ENCODE measurements at regions of chr13 and their contacts with region 1.

Region 1: GRCh38 chr13:33537026-33537425 is 251.5 kb upstream of the STARD13 start:
- DNase-seq: no peak
- ATAC-seq: no peak

Region 2: DNA sequence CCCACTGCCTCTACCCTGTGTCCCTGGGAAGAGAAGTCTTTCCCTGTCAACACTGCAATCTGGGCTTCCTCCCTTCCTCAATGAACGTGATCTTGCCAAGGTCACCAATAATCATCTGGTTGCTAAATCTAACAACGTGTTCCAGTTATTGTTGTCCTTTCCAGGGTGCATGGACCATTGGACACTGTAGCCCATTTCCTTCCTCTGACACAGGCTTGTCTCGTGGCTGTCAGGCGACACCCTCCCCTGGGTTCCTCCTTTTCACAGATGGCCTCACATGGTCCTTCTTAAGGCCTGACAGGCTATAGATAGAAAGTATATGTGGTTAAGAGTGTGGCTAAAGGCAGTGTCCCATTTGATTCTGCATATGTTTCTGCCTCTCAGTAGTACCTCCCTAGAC is 183.8 kb before region 1 on chr13:
- intact Hi-C with region 1: no loop called
- DNase-seq: peak; percentile 33
- ATAC-seq: peak; percentile 25 to 46

Region 3: DNA sequence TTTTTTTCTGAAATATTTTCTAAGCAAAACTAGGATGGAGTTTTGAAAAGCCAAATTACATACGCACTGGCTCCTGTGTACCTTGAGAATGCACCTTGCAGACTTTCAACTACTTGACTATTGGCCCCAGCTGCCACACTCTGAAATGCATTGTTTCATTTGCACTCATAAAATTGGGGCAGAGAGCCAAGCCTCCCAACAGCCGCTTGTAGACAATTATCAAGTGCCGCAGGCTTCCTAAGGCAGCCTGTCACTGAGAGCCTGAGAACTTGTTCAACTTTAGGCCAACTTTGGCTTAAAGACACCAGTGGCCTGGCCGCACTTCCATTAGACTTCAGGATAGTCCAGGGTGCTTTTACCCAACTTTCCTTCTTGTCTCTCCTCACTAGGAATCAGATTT is 135.8 kb before region 1 on chr13:
- intact Hi-C with region 1: loop called in 1 of 2 experiments (anchors 10 kb)
- DNase-seq: peak; percentile 27
- ATAC-seq: peak; percentile 55 to 56

Region 4: GRCh38 chr13:33678906-33679657 is 142.1 kb after region 1 on chr13:
- intact Hi-C with region 1: no loop called
- DNase-seq: peak; percentile 69
- ATAC-seq: peak; percentile 46 to 80